K562 (cell line): ENCODE measurements at regions of chr16 and their contacts with region 1.

Region 1: DNA sequence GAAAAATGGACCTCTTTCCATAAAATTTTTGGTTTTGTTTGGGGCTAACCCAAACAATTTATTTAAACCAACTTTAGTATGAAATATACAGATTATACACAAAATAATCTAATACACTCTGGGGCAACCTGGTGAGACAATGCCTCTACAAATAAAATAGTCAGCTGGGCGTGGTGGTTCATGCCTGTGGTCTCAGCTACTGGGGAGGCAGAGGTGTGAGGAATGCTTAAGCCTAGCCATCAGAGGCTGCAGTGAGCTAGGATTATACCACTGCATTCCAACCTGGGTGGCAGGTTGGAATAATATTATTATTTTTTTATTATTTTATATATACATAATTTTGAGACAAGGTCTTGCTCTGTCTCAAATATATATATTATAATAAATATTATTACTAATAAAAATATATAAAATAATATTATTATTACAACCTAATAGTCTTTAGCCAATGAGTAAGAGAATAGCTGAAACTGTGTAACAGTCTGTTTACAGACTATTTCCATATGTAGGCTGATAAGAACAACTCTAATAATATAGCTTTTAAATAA is 50.5 kb downstream of the GLG1 start:
- DNase-seq: no peak
- ATAC-seq: no peak
- H3K4me3 ChIP-seq: no peak overlapping the region
- H3K27ac ChIP-seq: no peak overlapping the region
- H3K4me1 ChIP-seq: peaks cover 0 to 3% of the 10 kb centered on the region in 2 experiments; a peak in 2 of 5 replicates
- H3K27me3 ChIP-seq: no peaks in the 10 kb centered on the region
- CTCF ChIP-seq: no peak
- EP300 ChIP-seq: no peak
- POLR2A ChIP-seq: no peak
- RAD21 ChIP-seq: no peak

Region 2: DNA sequence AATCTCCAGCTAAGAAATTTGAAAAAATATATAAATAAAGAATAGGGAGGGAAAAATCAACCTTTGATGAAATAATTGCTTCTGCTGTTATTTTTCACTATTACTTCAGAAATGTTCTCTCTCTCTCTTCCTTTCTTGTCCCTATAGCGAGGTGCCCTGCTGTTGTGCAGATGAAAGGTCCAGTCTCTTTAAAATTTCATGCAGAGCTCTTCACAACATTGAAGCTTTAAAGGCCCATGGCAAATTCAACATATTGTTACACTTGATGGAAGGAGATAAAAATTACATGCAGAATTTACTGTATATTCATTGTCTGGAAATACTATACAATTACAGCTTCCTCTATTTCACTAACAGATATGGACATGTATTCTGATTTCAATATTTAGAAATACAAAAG is 346.2 kb before region 1 on chr16:
- CTCF ChIA-PET with region 1: no interaction called
- POLR2A ChIA-PET with region 1: no interaction called
- in situ Hi-C with region 1: no loop called
- intact Hi-C with region 1: no loop called
- DNase-seq: no peak
- ATAC-seq: no peak
- H3K4me3 ChIP-seq: no peak overlapping the region
- H3K27ac ChIP-seq: no peak overlapping the region
- H3K4me1 ChIP-seq: no peaks in the 10 kb centered on the region
- H3K27me3 ChIP-seq: peaks cover 2 to 23% of the 10 kb centered on the region in 2 experiments; a peak in 4 of 5 replicates
- CTCF ChIP-seq: no peak
- EP300 ChIP-seq: no peak
- POLR2A ChIP-seq: no peak
- RAD21 ChIP-seq: no peak

Region 3: GRCh38 chr16:74448992-74449434 is 107.4 kb before region 1 on chr16:
- CTCF ChIA-PET with region 1: no interaction called
- POLR2A ChIA-PET with region 1: no interaction called
- in situ Hi-C with region 1: loop called (anchors 5 kb)
- intact Hi-C with region 1: loop called (anchors 5 kb)
- DNase-seq: peak in 2 of 4 experiments; percentile 5 to 18
- ATAC-seq: no peak
- H3K4me3 ChIP-seq: no peak overlapping the region
- H3K27ac ChIP-seq: no peak overlapping the region
- H3K4me1 ChIP-seq: no peaks in the 10 kb centered on the region; a peak in 1 of 5 replicates
- H3K27me3 ChIP-seq: no peaks in the 10 kb centered on the region
- CTCF ChIP-seq: no peak
- EP300 ChIP-seq: no peak
- POLR2A ChIP-seq: no peak
- RAD21 ChIP-seq: no peak

Region 4: DNA sequence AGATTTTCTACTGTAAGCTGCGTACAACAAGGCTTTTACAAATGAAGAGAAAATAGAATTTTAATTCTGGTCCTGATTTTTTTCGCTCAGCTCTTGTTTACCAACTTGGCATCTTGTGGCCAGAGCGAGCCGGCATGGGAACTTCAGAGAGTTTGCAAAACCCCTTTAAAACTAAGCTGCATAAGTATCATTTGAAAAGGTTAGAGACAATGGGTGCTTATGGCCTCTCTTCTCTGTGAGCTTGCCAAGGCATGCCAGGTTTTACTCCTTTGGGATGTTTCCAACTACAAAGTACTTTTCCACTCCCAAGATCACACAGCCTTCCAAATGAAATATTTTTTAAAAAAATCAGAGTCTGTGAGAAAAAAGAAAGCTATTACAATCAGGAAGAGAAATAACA is 280.6 kb after region 1 on chr16:
- CTCF ChIA-PET with region 1: no interaction called
- POLR2A ChIA-PET with region 1: no interaction called
- in situ Hi-C with region 1: no loop called
- intact Hi-C with region 1: no loop called
- DNase-seq: no peak
- ATAC-seq: no peak
- H3K4me3 ChIP-seq: no peak overlapping the region
- H3K27ac ChIP-seq: no peak overlapping the region
- H3K4me1 ChIP-seq: peaks cover 0 to 4% of the 10 kb centered on the region in 2 experiments; a peak in 3 of 5 replicates
- H3K27me3 ChIP-seq: no peaks in the 10 kb centered on the region
- CTCF ChIP-seq: no peak
- EP300 ChIP-seq: no peak
- POLR2A ChIP-seq: no peak
- RAD21 ChIP-seq: no peak